PC-3 (cell line): ENCODE measurements at regions of chr13 and their contacts with region 1.

Region 1: GRCh38 chr13:48192411-48192935 is 40.5 kb upstream of the ITM2B start:
- DNase-seq: no peak
- ATAC-seq: no peak
- H3K4me3 ChIP-seq: no peak overlapping the region
- H3K27ac ChIP-seq: no peak overlapping the region
- H3K4me1 ChIP-seq: no peaks in the 10 kb centered on the region
- H3K27me3 ChIP-seq: no peaks in the 10 kb centered on the region
- CTCF ChIP-seq: no peak

Region 2: DNA sequence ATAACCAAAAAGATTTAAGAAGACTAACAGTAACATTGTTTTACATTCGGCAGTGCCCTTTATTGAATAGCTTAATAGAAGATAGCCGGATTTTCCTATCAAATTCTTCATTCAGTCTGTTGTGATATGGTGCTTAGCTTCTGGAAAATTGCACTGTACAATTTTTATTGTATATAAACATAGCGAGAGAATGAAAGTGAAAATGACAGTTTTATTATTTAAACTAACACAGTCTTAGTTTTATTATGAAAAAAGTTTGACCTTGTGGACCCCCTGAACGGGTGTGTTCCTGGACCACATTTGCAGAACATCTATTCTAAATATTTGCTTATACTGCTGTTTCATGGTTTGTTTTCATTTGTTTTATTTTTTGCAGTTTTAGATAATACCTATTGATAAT is 49.2 kb after region 1 on chr13:
- CTCF ChIA-PET with region 1: no interaction called
- POLR2A ChIA-PET with region 1: interaction called, 16 read pairs
- intact Hi-C with region 1: no loop called
- DNase-seq: no peak
- ATAC-seq: no peak
- H3K4me3 ChIP-seq: no peak overlapping the region
- H3K27ac ChIP-seq: no peak overlapping the region
- H3K4me1 ChIP-seq: peaks cover 17% of the 10 kb centered on the region; the same call in 1 of the 2 replicates
- H3K27me3 ChIP-seq: no peaks in the 10 kb centered on the region
- CTCF ChIP-seq: no peak

Region 3: GRCh38 chr13:48380581-48380980 is 188.1 kb after region 1 on chr13:
- CTCF ChIA-PET with region 1: no interaction called
- POLR2A ChIA-PET with region 1: no interaction called
- intact Hi-C with region 1: no loop called
- DNase-seq: no peak
- ATAC-seq: no peak
- H3K4me3 ChIP-seq: no peak overlapping the region
- H3K27ac ChIP-seq: no peak overlapping the region
- H3K4me1 ChIP-seq: no peaks in the 10 kb centered on the region
- H3K27me3 ChIP-seq: no peaks in the 10 kb centered on the region
- CTCF ChIP-seq: no peak